ENCODE measurements at regions of chr4 and their contacts with region 1.

Region 1: GRCh38 chr4:109294006-109294405 is 8.5 kb downstream of the COL25A1 start:
- DNase-seq: peak in 1 of 5 donors; percentile 3
- H3K4me3 ChIP-seq: no peak overlapping the region
- H3K4me3 Mint-ChIP-seq: no peak overlapping the region
- H3K27ac ChIP-seq: no peak overlapping the region
- H3K27ac Mint-ChIP-seq: no peak overlapping the region
- H3K4me1 ChIP-seq: no peaks in the 10 kb centered on the region
- H3K4me1 Mint-ChIP-seq: no peaks in the 10 kb centered on the region
- H3K27me3 ChIP-seq: peaks cover 6% of the 10 kb centered on the region
- H3K27me3 Mint-ChIP-seq: peaks cover 9 to 18% of the 10 kb centered on the region in 2 donors

Region 2: GRCh38 chr4:108834835-108835384 is 459.1 kb before region 1 on chr4:
- CTCF ChIA-PET with region 1: no interaction called
- POLR2A ChIA-PET with region 1: no interaction called
- intact Hi-C with region 1: loop called (anchors 10 kb)
- DNase-seq: peak in 1 of 5 donors; percentile 9
- H3K4me3 ChIP-seq: no peak overlapping the region
- H3K4me3 Mint-ChIP-seq: no peak overlapping the region
- H3K27ac ChIP-seq: no peak overlapping the region
- H3K27ac Mint-ChIP-seq: no peak overlapping the region
- H3K4me1 ChIP-seq: no peaks in the 10 kb centered on the region
- H3K4me1 Mint-ChIP-seq: no peaks in the 10 kb centered on the region
- H3K27me3 ChIP-seq: no peaks in the 10 kb centered on the region
- H3K27me3 Mint-ChIP-seq: peaks cover 2 to 7% of the 10 kb centered on the region in 2 donors

Region 3: DNA sequence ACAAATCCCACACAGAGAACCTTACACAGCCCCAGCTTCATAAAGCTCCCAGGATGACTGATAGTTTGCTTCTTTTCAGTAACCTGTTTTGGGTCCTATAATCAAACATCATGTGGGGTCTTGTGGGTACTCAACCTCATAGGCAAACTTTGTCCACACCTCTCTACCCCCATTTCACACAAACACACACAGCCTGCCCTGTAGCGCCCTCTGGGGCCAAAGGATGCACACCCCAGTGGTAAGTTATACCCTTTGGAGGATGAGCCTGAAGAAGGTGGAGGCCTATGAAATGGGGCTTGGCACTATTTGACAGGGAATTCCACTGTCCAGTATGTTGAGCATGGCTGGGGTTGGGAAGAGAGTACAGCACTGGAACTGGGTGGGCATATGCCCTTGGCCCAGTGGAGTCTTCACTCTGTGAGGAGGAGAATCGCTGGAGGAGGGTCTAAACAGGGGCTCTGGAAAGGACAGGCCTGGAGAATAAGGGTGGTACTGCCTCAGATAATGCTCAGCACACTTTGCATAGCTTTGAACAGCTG is 39.0 kb after region 1 on chr4:
- CTCF ChIA-PET with region 1: no interaction called
- POLR2A ChIA-PET with region 1: no interaction called
- intact Hi-C with region 1: no loop called
- DNase-seq: no peak
- H3K4me3 ChIP-seq: no peak overlapping the region
- H3K4me3 Mint-ChIP-seq: no peak overlapping the region
- H3K27ac ChIP-seq: no peak overlapping the region
- H3K27ac Mint-ChIP-seq: no peak overlapping the region
- H3K4me1 ChIP-seq: no peaks in the 10 kb centered on the region
- H3K4me1 Mint-ChIP-seq: no peaks in the 10 kb centered on the region
- H3K27me3 ChIP-seq: no peaks in the 10 kb centered on the region
- H3K27me3 Mint-ChIP-seq: peaks cover 2% of the 10 kb centered on the region in 2 donors